Activated CD4-positive, alpha-beta T cell treated with anti-CD3 and anti-CD28 coated beads for 36 hours (primary cell): ENCODE measurements at regions of chr11 and their contacts with region 1.

Region 1: GRCh38 chr11:66022401-66023185 is 3.7 kb downstream of the CATSPER1 start:
- DNase-seq: peak; percentile 89
- ATAC-seq: peak; percentile 94
- H3K4me3 Mint-ChIP-seq: no peak overlapping the region
- H3K27ac Mint-ChIP-seq: no peak overlapping the region
- H3K4me1 Mint-ChIP-seq: peaks cover 8% of the 10 kb centered on the region
- H3K27me3 Mint-ChIP-seq: peaks cover 7% of the 10 kb centered on the region

Region 2: DNA sequence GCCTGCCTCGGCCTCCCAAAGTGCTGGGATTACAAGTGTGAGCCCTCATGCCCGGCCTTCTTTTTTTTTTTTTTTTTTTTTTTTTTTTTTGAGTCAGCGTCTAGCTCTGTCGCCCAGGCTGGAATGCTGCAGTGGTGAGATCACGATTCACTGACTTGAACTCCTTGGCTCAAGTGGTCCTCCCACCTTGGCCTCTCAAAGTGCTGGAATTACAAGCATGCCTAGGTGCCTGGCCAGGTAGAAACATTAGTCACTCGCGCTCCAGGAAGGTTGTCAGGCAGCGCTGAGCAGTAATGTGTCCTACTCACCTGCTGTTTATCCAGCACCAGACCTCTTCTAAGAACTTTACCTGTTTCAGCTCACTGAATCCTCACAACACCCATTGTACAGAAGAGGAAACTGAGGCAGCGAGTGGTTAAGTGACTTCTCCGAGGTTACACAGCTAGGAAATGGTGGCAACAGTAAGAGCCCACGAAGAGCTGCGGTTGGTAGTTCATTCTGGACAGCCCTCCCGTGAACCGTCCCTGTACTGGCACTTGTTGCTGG is 11.3 kb before region 1 on chr11:
- CTCF ChIA-PET with region 1: interaction called, 16 read pairs
- POLR2A ChIA-PET with region 1: no interaction called
- intact Hi-C with region 1: no loop called
- DNase-seq: no peak
- ATAC-seq: no peak
- H3K4me3 Mint-ChIP-seq: no peak overlapping the region
- H3K27ac Mint-ChIP-seq: no peak overlapping the region
- H3K4me1 Mint-ChIP-seq: no peaks in the 10 kb centered on the region
- H3K27me3 Mint-ChIP-seq: peaks cover 18% of the 10 kb centered on the region

Region 3: DNA sequence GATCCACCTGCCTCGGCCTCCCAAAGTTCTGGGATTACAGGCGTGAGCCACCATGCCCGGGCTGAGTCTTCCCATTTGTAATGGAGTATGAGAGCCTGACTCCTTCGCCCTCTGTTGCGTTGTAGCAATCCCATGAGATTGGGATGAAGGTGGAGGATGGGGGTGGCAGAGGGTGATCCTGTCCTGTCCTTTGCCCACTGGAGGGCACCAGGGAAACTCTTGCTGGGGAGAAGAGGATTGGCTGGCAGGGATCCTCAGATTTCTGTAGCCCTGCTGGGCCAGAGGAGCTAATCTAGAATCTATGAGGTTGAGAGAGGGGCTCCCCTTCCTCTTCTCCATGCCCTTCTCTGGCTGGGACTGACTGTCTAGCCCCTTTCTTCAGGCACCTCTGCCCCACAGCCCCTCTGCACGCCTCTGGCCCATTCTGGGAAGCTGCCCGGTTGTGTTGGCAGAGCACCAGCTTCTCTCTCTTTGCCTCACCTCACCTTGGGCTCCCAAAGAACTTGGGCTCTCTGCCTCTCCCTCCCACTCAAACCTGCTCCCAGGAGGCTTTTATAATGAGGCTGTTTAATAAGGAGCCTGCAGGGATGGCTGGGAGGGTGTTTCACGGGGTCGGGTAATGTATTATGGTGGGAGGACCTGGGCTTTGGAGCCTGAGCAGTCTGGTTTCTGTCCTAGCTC is 13.2 kb after region 1 on chr11:
- CTCF ChIA-PET with region 1: interaction called, 11 read pairs
- POLR2A ChIA-PET with region 1: no interaction called
- intact Hi-C with region 1: no loop called
- DNase-seq: no peak
- ATAC-seq: no peak
- H3K4me3 Mint-ChIP-seq: no peak overlapping the region
- H3K27ac Mint-ChIP-seq: no peak overlapping the region
- H3K4me1 Mint-ChIP-seq: no peaks in the 10 kb centered on the region
- H3K27me3 Mint-ChIP-seq: peaks cover 4% of the 10 kb centered on the region

Region 4: DNA sequence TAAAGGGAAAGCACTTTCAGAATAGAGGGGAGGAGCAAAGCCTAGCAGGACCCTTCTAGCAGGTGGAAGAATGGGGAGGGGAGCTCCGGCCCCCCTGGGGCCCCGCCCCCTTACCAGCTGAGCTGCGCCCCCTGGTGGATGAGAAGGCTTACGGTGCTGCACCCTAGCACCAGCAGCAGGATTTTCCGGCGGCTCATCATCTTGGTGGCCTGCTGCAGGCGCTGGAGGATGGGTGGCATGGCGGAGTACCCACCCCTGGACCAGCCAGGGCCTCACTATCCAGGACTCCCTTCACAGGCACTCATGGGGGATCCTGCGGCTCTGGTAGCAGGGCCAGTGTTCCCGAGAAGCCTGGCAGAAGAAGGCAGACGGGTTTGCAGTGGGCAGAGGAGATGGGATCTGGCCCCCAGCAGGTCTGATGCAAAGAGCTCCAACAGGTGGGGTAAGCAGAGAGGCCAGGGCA is 22.6 kb after region 1 on chr11:
- CTCF ChIA-PET with region 1: interaction called, 29 read pairs
- POLR2A ChIA-PET with region 1: no interaction called
- intact Hi-C with region 1: no loop called
- DNase-seq: peak; percentile 91
- ATAC-seq: peak; percentile 93
- H3K4me3 Mint-ChIP-seq: peak overlapping the region; percentile 21
- H3K27ac Mint-ChIP-seq: no peak overlapping the region
- H3K4me1 Mint-ChIP-seq: peaks cover 22% of the 10 kb centered on the region
- H3K27me3 Mint-ChIP-seq: peaks cover 4% of the 10 kb centered on the region